ENCODE measurements at regions of chrX and their contacts with region 1.

Region 1: GRCh38 chrX:107716816-107717700 is 58.5 kb downstream of the TSC22D3 start:
- DNase-seq: peak; percentile 90 to 92
- H3K4me3 ChIP-seq: peak overlapping the region; percentile 72 to 83 (median 82)
- H3K27ac ChIP-seq: peak overlapping the region; percentile 84 to 97
- H3K4me1 ChIP-seq: no peaks in the 10 kb centered on the region
- H3K27me3 ChIP-seq: peaks cover 0 to 70% of the 10 kb centered on the region in 2 donors
- CTCF ChIP-seq: peak in 1 of 3 donors; percentile 31
- POLR2A ChIP-seq: peak; percentile 97

Region 2: DNA sequence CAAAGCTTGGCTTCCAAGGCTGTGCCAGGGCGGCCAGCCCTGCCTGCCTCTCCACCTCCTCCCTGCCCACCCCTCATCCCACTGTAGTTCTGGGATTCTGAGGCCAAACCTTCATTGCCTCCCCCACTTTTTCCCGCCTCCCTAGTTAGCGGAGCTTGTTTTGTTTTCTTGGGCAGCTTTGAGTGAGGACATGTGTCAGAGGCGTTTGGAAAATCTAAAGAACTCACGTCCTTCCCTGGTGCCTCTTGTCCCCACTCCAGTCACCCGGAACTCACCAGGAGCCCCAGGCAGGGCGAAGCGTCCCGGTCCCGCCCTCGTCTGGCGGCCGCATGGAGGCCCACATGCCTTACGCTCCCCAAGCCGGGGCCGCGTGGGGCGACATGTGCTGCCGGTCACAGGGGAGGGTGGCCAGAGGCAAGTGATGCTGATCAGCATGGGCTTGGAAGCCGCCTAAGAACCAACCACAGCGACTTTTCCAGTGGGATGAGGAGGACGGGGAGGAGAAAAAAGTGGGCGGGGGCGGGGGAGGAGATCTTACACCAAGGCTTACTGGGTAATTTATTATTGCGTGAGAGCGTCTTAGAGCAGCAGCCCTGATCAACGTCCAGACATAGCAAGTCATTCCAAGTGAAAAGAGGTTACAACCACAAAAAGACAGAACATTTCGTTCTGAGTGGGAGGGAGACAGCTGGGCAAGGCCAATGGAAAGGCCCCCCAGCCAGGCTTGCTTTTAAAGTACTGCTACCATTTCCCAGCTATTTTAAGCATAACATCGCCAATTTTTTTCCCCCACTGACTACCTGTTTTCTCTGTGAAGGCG is 40.3 kb before region 1 on chrX:
- intact Hi-C with region 1: loop called (anchors 5 kb)
- DNase-seq: peak; percentile 82 to 91
- H3K4me3 ChIP-seq: peak overlapping the region; percentile 55 to 64 (median 59)
- H3K27ac ChIP-seq: peak overlapping the region; percentile 94 to 99
- H3K4me1 ChIP-seq: peaks cover 0 to 7% of the 10 kb centered on the region in 2 donors
- H3K27me3 ChIP-seq: peaks cover 0 to 58% of the 10 kb centered on the region in 2 donors
- CTCF ChIP-seq: no peak
- POLR2A ChIP-seq: no peak

Measured in breast epithelium (tissue), 4 donors.